Endothelial cell of umbilical vein (primary cell): ENCODE measurements at regions of chr1 and their contacts with region 1.

Region 1: DNA sequence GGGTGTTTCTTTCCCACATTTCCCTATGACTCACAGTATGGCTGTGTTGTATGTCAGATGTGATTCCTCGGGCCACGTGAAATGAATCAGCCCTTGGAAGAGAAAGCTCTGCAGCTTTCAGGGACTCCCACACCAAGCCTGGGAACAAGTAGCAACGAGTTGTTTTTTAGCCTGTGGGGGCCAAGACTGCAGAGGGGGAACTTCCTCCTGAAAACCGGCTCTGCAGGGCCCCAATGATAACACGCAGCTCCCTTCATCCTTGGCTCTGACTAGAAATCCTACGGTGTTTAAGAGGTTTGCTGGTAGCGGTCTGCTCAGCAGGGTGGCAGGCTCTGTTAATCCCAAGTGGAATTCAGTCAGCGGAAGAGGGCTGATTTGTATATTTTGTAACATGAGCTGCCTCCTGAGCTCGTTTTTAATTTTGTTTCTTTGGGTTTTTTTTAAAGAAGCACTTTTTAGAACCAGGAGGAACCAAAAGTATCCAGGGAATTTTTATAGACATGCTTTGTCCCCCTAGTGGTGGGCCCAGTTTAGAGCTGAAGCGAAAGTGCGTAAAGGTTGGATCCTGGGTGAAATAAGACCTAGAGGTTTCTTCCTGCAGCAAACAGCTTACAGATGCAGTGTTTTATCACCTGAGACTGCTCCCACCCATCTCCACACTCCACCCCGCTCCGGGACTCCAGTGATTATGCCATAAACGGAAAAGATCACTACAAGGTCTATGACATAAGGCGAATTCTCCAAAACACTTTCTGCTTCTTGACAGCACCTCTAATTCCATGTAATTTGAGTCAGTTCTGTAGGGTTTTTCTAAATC is 48.8 kb downstream of the LAMC2 start:
- DNase-seq: peak; percentile 98
- H3K4me3 ChIP-seq: peak overlapping the region; percentile 13 to 77 (median 18)
- H3K27ac ChIP-seq: peak overlapping the region; percentile 81
- H3K4me1 ChIP-seq: peaks cover 30% of the 10 kb centered on the region
- H3K27me3 ChIP-seq: no peaks in the 10 kb centered on the region
- CTCF ChIP-seq: peak; percentile 69 to 71
- POLR2A ChIP-seq: no peak

Region 2: DNA sequence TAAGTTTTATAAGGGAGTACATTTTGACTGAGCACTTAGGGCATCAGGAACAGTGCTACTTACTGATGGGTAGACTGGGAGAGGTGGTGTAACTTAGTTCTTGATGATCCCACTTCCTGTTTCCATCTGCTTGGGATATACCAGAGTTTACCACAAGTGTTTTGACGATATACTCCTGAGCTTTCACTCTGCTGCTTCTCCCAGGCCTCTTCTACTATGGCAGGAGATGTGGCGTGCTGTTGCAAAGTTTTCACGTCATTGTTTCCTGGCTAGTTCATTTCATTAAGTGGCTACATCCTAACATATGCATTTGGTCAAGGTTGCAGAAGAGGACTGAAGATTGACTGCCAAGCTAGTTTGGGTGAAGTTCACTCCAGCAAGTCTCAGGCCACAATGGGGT is 90.1 kb before region 1 on chr1:
- CTCF ChIA-PET with region 1: interaction called, 16 read pairs
- POLR2A ChIA-PET with region 1: no interaction called
- dilution Hi-C with region 1: no loop called
- intact Hi-C with region 1: loop called (anchors 1 kb)
- DNase-seq: no peak
- H3K4me3 ChIP-seq: no peak overlapping the region
- H3K27ac ChIP-seq: no peak overlapping the region
- H3K4me1 ChIP-seq: peaks cover 10% of the 10 kb centered on the region
- H3K27me3 ChIP-seq: no peaks in the 10 kb centered on the region
- CTCF ChIP-seq: no peak
- POLR2A ChIP-seq: no peak

Region 3: GRCh38 chr1:183195142-183195574 is 39.7 kb before region 1 on chr1:
- CTCF ChIA-PET with region 1: interaction called, 10 read pairs
- POLR2A ChIA-PET with region 1: no interaction called
- dilution Hi-C with region 1: no loop called
- intact Hi-C with region 1: no loop called
- DNase-seq: peak; percentile 60
- H3K4me3 ChIP-seq: no peak overlapping the region
- H3K27ac ChIP-seq: peak overlapping the region; percentile 44
- H3K4me1 ChIP-seq: peaks cover 12% of the 10 kb centered on the region
- H3K27me3 ChIP-seq: no peaks in the 10 kb centered on the region
- CTCF ChIP-seq: no peak
- POLR2A ChIP-seq: no peak

Region 4: DNA sequence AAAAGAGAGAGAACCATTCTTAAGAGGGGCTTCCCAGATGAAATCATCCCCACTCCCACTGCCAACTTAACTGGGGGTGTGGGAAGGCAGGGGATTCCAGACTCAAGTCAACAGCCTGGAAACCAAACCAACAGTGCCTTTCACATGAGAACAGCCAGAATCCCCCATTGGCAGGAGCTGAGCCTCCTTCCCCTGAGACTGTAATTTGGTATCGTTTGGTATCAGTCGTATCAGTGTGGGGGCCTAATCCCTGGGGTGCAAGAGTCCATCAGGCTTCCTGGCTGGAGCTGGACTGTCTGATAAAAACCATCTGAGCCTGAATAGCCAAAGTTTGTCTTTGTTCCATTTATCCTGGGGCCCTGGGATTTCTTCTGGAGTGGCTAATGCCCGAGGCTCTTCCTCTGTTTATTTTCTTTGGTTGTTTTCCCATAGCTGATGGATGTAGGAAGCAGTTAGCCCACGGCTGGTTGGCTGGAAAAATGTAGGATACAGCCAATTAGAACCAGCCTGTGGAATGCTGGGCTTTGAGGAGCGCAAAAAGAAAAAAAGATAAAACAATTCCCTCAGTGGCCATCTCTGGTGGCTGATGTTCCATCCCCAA is 35.8 kb after region 1 on chr1:
- CTCF ChIA-PET with region 1: interaction called, 20 read pairs
- POLR2A ChIA-PET with region 1: no interaction called
- dilution Hi-C with region 1: no loop called
- intact Hi-C with region 1: loop called (anchors 2 kb)
- DNase-seq: peak; percentile 92
- H3K4me3 ChIP-seq: no peak overlapping the region
- H3K27ac ChIP-seq: peak overlapping the region; percentile 56
- H3K4me1 ChIP-seq: peaks cover 28% of the 10 kb centered on the region
- H3K27me3 ChIP-seq: no peaks in the 10 kb centered on the region
- CTCF ChIP-seq: no peak
- POLR2A ChIP-seq: no peak